IMR-90 (cell line): ENCODE measurements at regions of chr17 and their contacts with region 1.

Region 1: GRCh38 chr17:19386974-19387920 is at the start of gene MFAP4:
- DNase-seq: peak; percentile 90
- ATAC-seq: peak; percentile 43
- H3K4me3 ChIP-seq: peak within 1 kb of the TSS; percentile 57
- H3K27ac ChIP-seq: peak within 1 kb of the TSS; percentile 96
- H3K4me1 ChIP-seq: peaks cover 52% of the 10 kb centered on the region
- H3K27me3 ChIP-seq: no peaks in the 10 kb centered on the region
- CTCF ChIP-seq: no peak
- POLR2A ChIP-seq: no peak
- RAD21 ChIP-seq: no peak
- total RNA-seq, gene MFAP4: 5.0 and 7.0 TPM in 2 replicates

Region 2: DNA sequence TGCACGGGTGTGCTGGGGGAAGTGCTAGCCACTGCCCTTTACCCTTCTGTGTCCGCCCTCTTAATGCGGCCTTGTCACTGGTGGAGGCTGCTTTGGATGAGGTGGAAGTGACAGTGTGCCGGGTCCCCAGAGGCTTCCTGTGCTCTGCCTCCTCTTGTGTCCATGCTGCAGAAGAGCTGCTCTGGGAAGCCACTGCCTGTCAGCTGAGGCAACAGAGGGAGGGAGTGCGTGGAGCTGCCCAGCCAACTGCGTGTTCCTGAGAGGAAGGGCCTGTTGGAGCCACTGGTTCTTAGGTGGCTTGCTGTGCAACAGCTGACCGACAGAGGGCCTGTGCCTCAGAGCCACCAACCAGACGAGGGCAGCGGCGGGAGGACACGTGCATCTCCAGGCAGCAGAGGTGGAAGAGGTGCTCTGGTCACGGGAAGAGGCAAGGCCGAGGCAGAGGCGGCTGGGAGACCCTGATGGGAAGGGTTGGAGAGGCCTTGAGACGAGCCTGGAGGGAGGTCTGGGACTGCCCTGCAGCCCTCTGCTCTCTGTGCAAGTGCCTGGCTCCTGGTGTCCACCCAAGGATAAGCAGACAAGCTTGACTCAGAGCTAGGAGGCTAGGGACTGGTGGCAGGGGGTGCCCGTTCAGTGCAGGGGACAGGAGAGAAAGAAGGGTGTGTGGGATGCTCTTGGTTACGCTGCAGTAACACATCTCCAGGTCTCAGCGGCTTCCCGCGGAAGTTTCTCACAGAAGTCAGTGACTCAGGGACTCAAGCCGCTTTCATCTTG is 50.1 kb before region 1 on chr17:
- CTCF ChIA-PET with region 1: no interaction called
- POLR2A ChIA-PET with region 1: no interaction called
- dilution Hi-C with region 1: no loop called
- in situ Hi-C with region 1: no loop called
- intact Hi-C with region 1: no loop called
- DNase-seq: no peak
- ATAC-seq: no peak
- H3K4me3 ChIP-seq: no peak overlapping the region
- H3K27ac ChIP-seq: no peak overlapping the region
- H3K4me1 ChIP-seq: peaks cover 16% of the 10 kb centered on the region
- H3K27me3 ChIP-seq: no peaks in the 10 kb centered on the region
- CTCF ChIP-seq: no peak
- POLR2A ChIP-seq: no peak
- RAD21 ChIP-seq: no peak

Region 3: GRCh38 chr17:19482576-19482975 is 95.3 kb after region 1 on chr17:
- CTCF ChIA-PET with region 1: no interaction called
- POLR2A ChIA-PET with region 1: interaction called, 14 read pairs
- dilution Hi-C with region 1: no loop called
- in situ Hi-C with region 1: no loop called
- intact Hi-C with region 1: no loop called
- DNase-seq: peak; percentile 53
- ATAC-seq: peak; percentile 92
- H3K4me3 ChIP-seq: no peak overlapping the region
- H3K27ac ChIP-seq: no peak overlapping the region; the same call in 1 of the 2 replicates
- H3K4me1 ChIP-seq: peaks cover 6% of the 10 kb centered on the region; the same call in 1 of the 2 replicates
- H3K27me3 ChIP-seq: no peaks in the 10 kb centered on the region
- CTCF ChIP-seq: no peak
- POLR2A ChIP-seq: no peak
- RAD21 ChIP-seq: no peak

Region 4: GRCh38 chr17:19507775-19508576 is 120.7 kb after region 1 on chr17:
- CTCF ChIA-PET with region 1: no interaction called
- POLR2A ChIA-PET with region 1: no interaction called
- dilution Hi-C with region 1: no loop called
- in situ Hi-C with region 1: no loop called
- intact Hi-C with region 1: loop called (anchors 2 kb)
- DNase-seq: peak; percentile 92
- ATAC-seq: peak; percentile 98
- H3K4me3 ChIP-seq: peak overlapping the region; percentile 36
- H3K27ac ChIP-seq: peak overlapping the region; percentile 59
- H3K4me1 ChIP-seq: no peaks in the 10 kb centered on the region
- H3K27me3 ChIP-seq: no peaks in the 10 kb centered on the region
- CTCF ChIP-seq: no peak
- POLR2A ChIP-seq: no peak
- RAD21 ChIP-seq: no peak

Region 5: GRCh38 chr17:19523690-19524089 is 136.4 kb after region 1 on chr17:
- CTCF ChIA-PET with region 1: no interaction called
- POLR2A ChIA-PET with region 1: no interaction called
- dilution Hi-C with region 1: no loop called
- in situ Hi-C with region 1: no loop called
- intact Hi-C with region 1: no loop called
- DNase-seq: no peak
- ATAC-seq: no peak
- H3K4me3 ChIP-seq: no peak overlapping the region
- H3K27ac ChIP-seq: no peak overlapping the region
- H3K4me1 ChIP-seq: no peaks in the 10 kb centered on the region
- H3K27me3 ChIP-seq: peaks cover 23% of the 10 kb centered on the region
- CTCF ChIP-seq: no peak
- POLR2A ChIP-seq: no peak
- RAD21 ChIP-seq: no peak

Region 6: DNA sequence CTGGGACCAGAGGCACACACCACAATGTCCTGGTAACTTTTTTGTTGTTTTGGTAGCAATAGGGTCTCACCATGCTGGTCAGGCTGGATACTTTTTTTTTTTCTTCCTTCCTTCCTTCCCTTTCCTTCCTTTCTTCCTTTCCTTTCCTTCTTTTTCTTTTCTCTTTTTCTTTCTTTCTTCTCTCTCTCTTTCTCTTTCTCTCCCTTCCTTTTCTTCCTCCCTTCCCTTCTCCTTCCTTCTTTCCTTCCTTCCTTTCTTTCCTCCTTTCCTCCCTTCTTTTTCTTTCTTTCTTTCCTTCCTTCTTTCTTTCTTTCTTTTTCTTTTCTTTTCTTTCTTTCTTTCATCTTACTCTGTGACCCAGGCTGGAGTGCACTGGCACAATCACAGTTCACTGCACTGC is 498.9 kb after region 1 on chr17:
- CTCF ChIA-PET with region 1: no interaction called
- POLR2A ChIA-PET with region 1: no interaction called
- dilution Hi-C with region 1: no loop called
- in situ Hi-C with region 1: no loop called
- intact Hi-C with region 1: loop called (anchors 5 kb)
- DNase-seq: no peak
- ATAC-seq: no peak
- H3K4me3 ChIP-seq: no peak overlapping the region
- H3K27ac ChIP-seq: no peak overlapping the region
- H3K4me1 ChIP-seq: no peaks in the 10 kb centered on the region
- H3K27me3 ChIP-seq: no peaks in the 10 kb centered on the region
- CTCF ChIP-seq: no peak
- POLR2A ChIP-seq: no peak
- RAD21 ChIP-seq: no peak